Aorta (tissue), 5 donors: ENCODE measurements at regions of chr2 and their contacts with region 1.

Region 1: GRCh38 chr2:159615140-159615951 is 1.0 kb downstream of the BAZ2B start:
- DNase-seq: peak; percentile 92 to 94
- ATAC-seq: peak; percentile 97
- H3K4me3 ChIP-seq: peak overlapping the region; percentile 55 to 62
- H3K27ac ChIP-seq: peak overlapping the region; percentile 62 to 82
- H3K4me1 ChIP-seq: peaks cover 0 to 2% of the 10 kb centered on the region in 2 donors
- H3K27me3 ChIP-seq: no peaks in the 10 kb centered on the region

Region 2: GRCh38 chr2:159456491-159457426 is 158.6 kb before region 1 on chr2:
- intact Hi-C with region 1: loop called in 1 of 2 experiments (anchors 10 kb)
- DNase-seq: no peak
- ATAC-seq: no peak
- H3K4me3 ChIP-seq: no peak overlapping the region
- H3K27ac ChIP-seq: no peak overlapping the region
- H3K4me1 ChIP-seq: no peaks in the 10 kb centered on the region
- H3K27me3 ChIP-seq: no peaks in the 10 kb centered on the region

Region 3: GRCh38 chr2:159600752-159601151 is 14.6 kb before region 1 on chr2:
- intact Hi-C with region 1: no loop called
- DNase-seq: no peak
- ATAC-seq: no peak
- H3K4me3 ChIP-seq: no peak overlapping the region
- H3K27ac ChIP-seq: no peak overlapping the region
- H3K4me1 ChIP-seq: no peaks in the 10 kb centered on the region
- H3K27me3 ChIP-seq: no peaks in the 10 kb centered on the region

Region 4: GRCh38 chr2:159712143-159712928 is 97.0 kb after region 1 on chr2 and contains the start of gene MARCHF7:
- intact Hi-C with region 1: loop called (anchors 1 to 5 kb)
- DNase-seq: peak; percentile 98 to 99
- ATAC-seq: peak; percentile 100
- H3K4me3 ChIP-seq: peak within 1 kb of the TSS; percentile 74 to 81
- H3K27ac ChIP-seq: peak within 1 kb of the TSS; percentile 78 to 89
- H3K4me1 ChIP-seq: peaks cover 0 to 4% of the 10 kb centered on the region in 2 donors
- H3K27me3 ChIP-seq: no peaks in the 10 kb centered on the region
- total RNA-seq, gene MARCHF7: 81.3 to 88.1 TPM

Region 5: DNA sequence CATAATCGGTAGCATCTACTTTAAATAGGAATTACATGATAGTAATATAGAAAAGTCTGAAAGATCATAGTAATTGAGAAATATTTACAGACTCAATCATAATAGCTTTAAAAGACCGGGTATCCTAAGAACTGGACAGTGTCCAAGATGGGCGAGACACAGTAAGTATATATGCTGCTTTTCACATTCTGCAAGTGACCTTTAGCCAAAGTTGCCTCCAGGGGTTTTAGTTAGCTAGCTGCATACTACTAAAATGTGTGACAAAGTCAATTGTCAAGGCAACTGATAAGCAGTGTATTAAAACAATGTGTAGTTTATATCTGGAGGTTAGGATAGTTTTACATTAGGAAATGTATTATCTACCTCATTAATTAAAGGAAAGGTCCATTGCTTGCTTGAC is 158.1 kb after region 1 on chr2:
- intact Hi-C with region 1: no loop called
- DNase-seq: no peak
- ATAC-seq: no peak
- H3K4me3 ChIP-seq: no peak overlapping the region
- H3K27ac ChIP-seq: no peak overlapping the region
- H3K4me1 ChIP-seq: no peaks in the 10 kb centered on the region
- H3K27me3 ChIP-seq: no peaks in the 10 kb centered on the region